PC-3 (cell line): ENCODE measurements at regions of chr15 and their contacts with region 1.

Region 1: DNA sequence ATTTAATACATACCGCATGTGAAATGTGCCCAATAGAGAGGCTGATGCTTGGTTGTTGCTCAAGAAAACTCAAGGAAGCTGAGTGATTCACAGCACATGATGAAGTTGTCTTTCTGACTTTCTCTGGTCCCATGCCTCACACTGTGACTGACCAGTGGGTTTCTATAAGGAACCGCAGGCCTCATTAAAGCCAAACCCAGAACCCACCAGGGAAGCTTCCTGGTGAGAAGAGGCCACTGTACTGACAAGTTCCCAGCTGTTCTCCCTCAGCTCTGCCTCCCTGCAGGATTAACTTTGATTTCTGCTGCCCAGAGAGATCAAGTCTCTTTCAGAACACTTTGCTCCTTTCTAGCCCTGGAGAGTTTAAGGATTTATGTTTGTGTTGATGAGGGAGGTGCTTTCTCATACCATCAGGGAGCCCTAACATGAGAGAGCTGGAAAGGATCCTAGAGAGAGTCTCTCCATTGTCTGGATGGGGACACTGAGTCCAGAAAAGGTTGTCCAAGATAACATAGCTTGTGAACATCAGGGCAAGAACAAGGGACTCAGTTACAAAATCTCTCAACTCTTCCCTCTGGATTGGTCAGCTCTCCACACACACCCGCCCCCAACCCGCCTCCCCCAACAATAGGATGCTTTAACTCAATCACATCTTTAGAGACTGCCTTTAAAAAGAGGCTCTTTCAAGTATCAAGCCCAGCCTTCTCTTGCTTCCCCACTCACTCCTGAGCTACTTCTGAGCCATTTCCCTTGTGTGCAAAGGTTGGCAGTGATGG is 303.2 kb upstream of the TLE3 start:
- DNase-seq: no peak
- ATAC-seq: no peak
- H3K4me3 ChIP-seq: no peak overlapping the region
- H3K27ac ChIP-seq: no peak overlapping the region
- H3K4me1 ChIP-seq: no peaks in the 10 kb centered on the region; the same call in 1 of the 2 replicates
- H3K27me3 ChIP-seq: peaks cover 55% of the 10 kb centered on the region
- CTCF ChIP-seq: no peak

Region 2: DNA sequence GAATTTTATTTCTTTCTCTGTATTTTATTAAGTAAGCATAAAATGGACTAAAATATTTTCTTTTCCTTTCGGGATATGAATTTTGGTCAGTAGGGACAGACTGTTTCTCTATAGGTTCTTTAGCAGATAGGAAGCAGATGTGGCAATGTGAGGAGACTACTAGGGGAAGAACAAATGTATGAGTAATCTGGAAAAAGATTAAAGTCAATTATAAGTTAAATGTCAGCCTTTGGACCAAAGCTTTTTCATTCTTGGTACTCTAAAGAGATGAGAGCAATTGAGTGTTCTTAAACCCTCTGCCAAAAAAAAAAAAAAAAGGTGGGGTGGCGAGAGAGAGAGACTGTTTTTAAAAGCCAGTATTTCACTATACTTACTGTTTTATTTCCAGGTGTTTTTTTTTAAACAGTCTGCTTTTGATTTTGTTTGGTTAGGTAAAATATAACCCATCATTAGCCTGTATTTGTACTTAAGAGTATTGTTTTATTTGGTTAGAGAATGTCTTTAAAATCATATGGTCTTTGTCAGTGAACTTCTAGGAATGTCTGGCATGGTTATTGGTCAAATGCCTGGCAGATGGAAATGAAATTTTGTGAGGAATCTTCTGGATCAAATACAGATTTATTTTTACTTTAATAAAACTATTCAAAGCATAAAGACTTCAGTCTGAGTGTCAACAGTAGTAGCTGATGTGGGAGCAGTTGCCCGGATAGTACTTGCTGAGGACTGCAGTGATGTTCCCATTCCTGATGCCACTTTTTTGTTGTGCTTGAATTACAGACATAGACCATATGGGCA is 555.4 kb after region 1 on chr15:
- CTCF ChIA-PET with region 1: interaction called, 10 read pairs
- POLR2A ChIA-PET with region 1: no interaction called
- intact Hi-C with region 1: no loop called
- DNase-seq: no peak
- ATAC-seq: no peak
- H3K4me3 ChIP-seq: no peak overlapping the region
- H3K27ac ChIP-seq: no peak overlapping the region
- H3K4me1 ChIP-seq: no peaks in the 10 kb centered on the region
- H3K27me3 ChIP-seq: no peaks in the 10 kb centered on the region
- CTCF ChIP-seq: no peak